GM12878 (cell line): ENCODE measurements at regions of chr14 and their contacts with region 1.

Region 1: GRCh38 chr14:71923513-71923912 is 8.7 kb upstream of the RGS6 start:
- DNase-seq: no peak
- ATAC-seq: no peak
- H3K4me3 ChIP-seq: no peak overlapping the region
- H3K27ac ChIP-seq: no peak overlapping the region
- H3K4me1 ChIP-seq: no peaks in the 10 kb centered on the region
- H3K27me3 ChIP-seq: no peaks in the 10 kb centered on the region
- CTCF ChIP-seq: no peak
- EP300 ChIP-seq: no peak
- POLR2A ChIP-seq: no peak
- RAD21 ChIP-seq: no peak

Region 2: GRCh38 chr14:72291908-72292688 is 368.6 kb after region 1 on chr14:
- CTCF ChIA-PET with region 1: interaction called, 3 read pairs
- POLR2A ChIA-PET with region 1: no interaction called
- RAD21 ChIA-PET with region 1: no interaction called
- SMC1A ChIA-PET with region 1: no interaction called
- in situ Hi-C with region 1: loop called (anchors 10 kb)
- intact Hi-C with region 1: no loop called
- DNase-seq: peak; percentile 31
- ATAC-seq: peak; percentile 88
- H3K4me3 ChIP-seq: no peak overlapping the region
- H3K27ac ChIP-seq: no peak overlapping the region
- H3K4me1 ChIP-seq: no peaks in the 10 kb centered on the region
- H3K27me3 ChIP-seq: no peaks in the 10 kb centered on the region
- CTCF ChIP-seq: peak; percentile 68 to 73 (median 71)
- EP300 ChIP-seq: no peak
- POLR2A ChIP-seq: no peak
- RAD21 ChIP-seq: peak; percentile 84